ENCODE measurements at regions of chr1 and their contacts with region 1.

Region 1: DNA sequence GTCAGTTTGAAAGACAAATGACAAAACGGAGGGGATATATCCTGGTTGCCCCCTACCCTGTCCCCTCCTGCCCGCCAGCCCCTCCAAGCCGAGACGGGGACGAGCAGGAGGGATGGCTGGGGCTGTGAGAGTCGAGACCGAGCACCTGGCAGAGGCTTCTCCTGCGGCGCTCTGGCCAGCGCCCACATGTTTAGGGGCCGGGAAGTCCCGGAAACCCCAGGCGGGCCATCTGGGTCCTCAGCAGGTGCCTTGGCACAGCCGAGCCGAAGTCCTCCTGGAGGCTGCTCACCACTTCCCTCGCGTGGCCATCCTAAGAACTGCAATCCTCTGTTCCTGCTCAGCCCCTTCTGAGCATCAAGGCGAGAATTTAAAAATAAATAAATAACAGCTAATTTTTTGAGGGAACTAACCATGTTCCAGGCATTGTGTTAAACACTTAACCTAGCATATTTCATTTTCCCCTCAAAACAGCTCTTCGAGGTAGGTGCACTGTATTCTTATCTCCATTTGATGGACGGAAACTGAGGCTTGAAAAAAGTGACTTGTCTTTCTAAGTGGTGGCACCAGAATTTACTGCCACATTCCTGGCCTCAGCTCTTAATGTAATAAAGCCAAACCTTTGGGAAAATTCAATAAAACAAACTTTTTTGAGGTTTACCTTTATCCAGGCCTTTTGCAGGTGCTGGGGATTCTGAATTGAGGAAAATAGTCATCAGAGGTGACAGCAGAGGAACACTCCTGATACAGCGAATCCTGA is 3.5 kb upstream of the RIMS3 start:
- DNase-seq: peak; percentile 90
- ATAC-seq: peak; percentile 59
- H3K4me3 Mint-ChIP-seq: peak overlapping the region; percentile 36
- H3K27ac Mint-ChIP-seq: no peak overlapping the region
- H3K4me1 Mint-ChIP-seq: peaks cover 16% of the 10 kb centered on the region
- H3K27me3 Mint-ChIP-seq: peaks cover 12% of the 10 kb centered on the region

Region 2: DNA sequence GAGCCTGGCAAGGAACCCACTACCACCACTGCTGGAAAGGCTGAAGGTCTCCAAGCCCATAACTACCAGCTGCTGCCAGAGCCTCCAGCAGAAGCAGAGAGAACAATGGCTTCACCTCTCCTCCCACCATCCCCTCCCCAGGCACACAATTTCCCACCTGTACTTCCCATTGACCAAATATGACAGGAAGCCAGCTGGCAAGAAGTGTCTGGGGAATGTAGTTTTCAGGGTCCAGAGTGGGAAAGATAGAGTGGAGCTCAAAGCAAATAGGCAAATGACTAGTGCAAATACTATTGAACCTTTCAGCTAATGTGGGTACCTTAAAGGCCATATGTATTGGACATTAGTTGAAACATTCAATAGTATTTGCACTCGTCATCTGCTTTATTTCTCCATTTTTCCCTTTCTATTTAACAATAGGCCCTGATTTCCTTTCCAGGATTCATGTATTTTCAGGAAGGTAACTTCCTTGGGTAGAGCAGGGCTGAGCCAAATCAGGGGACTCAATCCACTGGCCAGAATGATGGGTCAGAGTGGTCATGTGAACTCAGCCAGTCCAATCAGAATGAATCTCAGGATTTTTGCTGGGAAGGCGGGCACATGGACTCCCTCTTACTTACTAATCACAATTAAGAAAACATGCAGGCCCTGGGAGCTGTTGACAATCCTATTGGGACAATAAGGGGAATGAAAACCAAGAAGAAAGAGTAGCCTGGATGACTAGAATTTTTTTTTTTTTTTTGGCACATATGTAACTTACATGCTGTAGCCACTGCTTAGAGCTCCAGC is 10.4 kb after region 1 on chr1:
- CTCF ChIA-PET with region 1: interaction called, 15 read pairs
- POLR2A ChIA-PET with region 1: no interaction called
- DNase-seq: no peak
- ATAC-seq: no peak
- H3K4me3 Mint-ChIP-seq: no peak overlapping the region
- H3K27ac Mint-ChIP-seq: no peak overlapping the region
- H3K4me1 Mint-ChIP-seq: peaks cover 4% of the 10 kb centered on the region
- H3K27me3 Mint-ChIP-seq: peaks cover 5% of the 10 kb centered on the region

Region 3: GRCh38 chr1:40783001-40783905 is 114.3 kb after region 1 on chr1 and contains the start of gene KCNQ4:
- CTCF ChIA-PET with region 1: no interaction called
- POLR2A ChIA-PET with region 1: no interaction called
- DNase-seq: no peak
- ATAC-seq: peak; percentile 28
- H3K4me3 Mint-ChIP-seq: peak within 1 kb of the TSS; percentile 41
- H3K27ac Mint-ChIP-seq: no peak within 1 kb of the TSS
- H3K4me1 Mint-ChIP-seq: peaks cover 33% of the 10 kb centered on the region
- H3K27me3 Mint-ChIP-seq: peaks cover 27% of the 10 kb centered on the region
- total RNA-seq, gene KCNQ4: 0.73 to 0.87 TPM

Measured in activated CD8-positive, alpha-beta T cell treated with anti-CD3 and anti-CD28 coated beads, Interleukin-2, amount 10 ng/mL, durations not matched to agents 7 days and 5 days (primary cell).